ENCODE measurements at regions of chr19 and their contacts with region 1.

Region 1: DNA sequence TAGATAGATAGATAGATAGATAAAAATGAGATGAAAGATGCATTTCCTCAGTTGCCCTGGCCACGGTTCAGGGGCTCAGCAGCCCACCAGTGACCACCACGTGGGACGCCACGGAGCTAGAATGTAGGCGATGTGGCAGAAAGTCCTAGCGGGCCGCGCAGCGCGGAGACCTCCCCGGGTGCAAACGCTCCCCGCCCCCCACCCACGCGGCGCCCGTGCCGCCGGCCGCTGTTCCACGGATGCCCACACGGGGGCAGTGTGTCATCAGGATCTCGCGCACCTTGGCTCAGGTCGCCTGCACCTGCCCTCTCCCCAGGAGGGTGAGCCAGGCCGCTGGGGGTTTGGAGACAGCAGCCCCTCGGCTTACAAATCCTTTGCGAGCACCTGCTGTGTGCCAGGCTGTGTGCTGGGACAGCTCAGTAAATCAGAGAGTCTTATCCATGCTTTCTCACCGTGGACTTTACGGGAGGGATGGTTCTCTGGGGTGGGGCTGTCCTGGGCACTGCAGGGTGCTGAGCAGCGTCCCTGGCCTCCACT is 13.7 kb upstream of the TLE5 start:
- DNase-seq: peak; percentile 76
- ATAC-seq: peak; percentile 78
- H3K4me3 Mint-ChIP-seq: peak overlapping the region; percentile 54
- H3K27ac Mint-ChIP-seq: no peak overlapping the region
- H3K4me1 Mint-ChIP-seq: peaks cover 2% of the 10 kb centered on the region; the same call in 1 of the 2 replicates
- H3K27me3 Mint-ChIP-seq: peaks cover 4% of the 10 kb centered on the region
- CTCF ChIP-seq: peak; percentile 81

Region 2: GRCh38 chr19:3062168-3063102 is 13.5 kb before region 1 on chr19 and contains the start of gene TLE5:
- CTCF ChIA-PET with region 1: interaction called, 15 read pairs
- POLR2A ChIA-PET with region 1: no interaction called
- DNase-seq: no peak
- ATAC-seq: peak; percentile 38
- H3K4me3 Mint-ChIP-seq: peak within 1 kb of the TSS; percentile 68
- H3K27ac Mint-ChIP-seq: no peak within 1 kb of the TSS
- H3K4me1 Mint-ChIP-seq: peaks cover 25% of the 10 kb centered on the region
- H3K27me3 Mint-ChIP-seq: no peaks in the 10 kb centered on the region
- CTCF ChIP-seq: no peak
- total RNA-seq, gene TLE5: 233 to 249 TPM (median 246 TPM) in 3 replicates

Region 3: DNA sequence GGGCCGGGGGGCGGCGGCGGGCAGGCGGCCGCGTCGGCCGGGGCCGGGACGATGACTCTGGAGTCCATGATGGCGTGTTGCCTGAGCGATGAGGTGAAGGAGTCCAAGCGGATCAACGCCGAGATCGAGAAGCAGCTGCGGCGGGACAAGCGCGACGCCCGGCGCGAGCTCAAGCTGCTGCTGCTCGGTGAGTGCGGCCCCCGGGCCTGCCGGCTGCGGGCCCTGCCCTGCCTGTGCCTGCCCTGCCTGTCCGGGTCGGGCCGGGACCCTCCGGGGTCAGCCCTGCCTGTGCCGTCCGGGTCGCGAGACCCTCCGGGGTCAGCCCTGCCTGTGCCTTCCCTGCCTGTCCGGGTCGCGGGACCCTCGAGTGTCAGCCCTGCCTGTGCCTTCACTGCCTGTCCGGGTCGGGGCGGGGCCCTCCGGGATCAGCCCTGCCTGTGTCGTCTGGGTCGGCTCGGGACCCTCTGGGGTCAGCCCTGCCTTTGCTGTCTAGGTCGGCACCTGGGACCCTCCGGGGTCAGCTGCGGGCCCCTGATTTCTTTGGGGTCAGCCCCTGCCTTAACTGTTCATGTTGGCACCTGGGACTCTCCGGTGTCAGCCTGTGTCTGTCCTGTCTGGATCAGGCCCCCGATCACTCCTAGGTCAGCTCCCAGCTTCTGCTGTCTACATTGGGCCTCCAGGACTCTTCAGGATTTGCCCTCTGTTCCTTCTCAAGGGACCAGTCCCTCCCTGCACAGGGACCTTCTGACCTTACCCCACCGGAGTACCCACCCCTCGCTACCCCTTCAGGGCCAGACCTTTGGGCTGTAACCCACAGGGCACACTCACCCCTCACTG is 18.9 kb after region 1 on chr19:
- CTCF ChIA-PET with region 1: interaction called, 12 read pairs
- POLR2A ChIA-PET with region 1: no interaction called
- DNase-seq: no peak
- ATAC-seq: no peak
- H3K4me3 Mint-ChIP-seq: peak overlapping the region; percentile 78
- H3K27ac Mint-ChIP-seq: no peak overlapping the region
- H3K4me1 Mint-ChIP-seq: peaks cover 14% of the 10 kb centered on the region
- H3K27me3 Mint-ChIP-seq: no peaks in the 10 kb centered on the region
- CTCF ChIP-seq: no peak

Region 4: GRCh38 chr19:3193256-3194105 is 117.5 kb after region 1 on chr19:
- CTCF ChIA-PET with region 1: no interaction called
- POLR2A ChIA-PET with region 1: no interaction called
- DNase-seq: no peak
- ATAC-seq: no peak
- H3K4me3 Mint-ChIP-seq: no peak overlapping the region
- H3K27ac Mint-ChIP-seq: no peak overlapping the region
- H3K4me1 Mint-ChIP-seq: peaks cover 7% of the 10 kb centered on the region
- H3K27me3 Mint-ChIP-seq: no peaks in the 10 kb centered on the region
- CTCF ChIP-seq: no peak